ENCODE measurements at regions of chr14 and their contacts with region 1.

Region 1: GRCh38 chr14:80213599-80213998 is 2.3 kb upstream of the DIO2 start:
- DNase-seq: peak; percentile 39
- H3K4me3 ChIP-seq: no peak overlapping the region
- H3K27ac ChIP-seq: no peak overlapping the region
- H3K4me1 ChIP-seq: no peaks in the 10 kb centered on the region
- H3K27me3 ChIP-seq: peaks cover 0 to 2% of the 10 kb centered on the region in 2 experiments
- CTCF ChIP-seq: peak; percentile 43 to 55
- POLR2A ChIP-seq: no peak

Region 2: GRCh38 chr14:80055667-80056496 is 157.7 kb before region 1 on chr14:
- CTCF ChIA-PET with region 1: interaction called, 14 read pairs
- POLR2A ChIA-PET with region 1: no interaction called
- dilution Hi-C with region 1: no loop called
- intact Hi-C with region 1: no loop called
- DNase-seq: peak; percentile 47
- H3K4me3 ChIP-seq: no peak overlapping the region
- H3K27ac ChIP-seq: no peak overlapping the region
- H3K4me1 ChIP-seq: no peaks in the 10 kb centered on the region
- H3K27me3 ChIP-seq: no peaks in the 10 kb centered on the region
- CTCF ChIP-seq: peak; percentile 46 to 61
- POLR2A ChIP-seq: no peak

Region 3: DNA sequence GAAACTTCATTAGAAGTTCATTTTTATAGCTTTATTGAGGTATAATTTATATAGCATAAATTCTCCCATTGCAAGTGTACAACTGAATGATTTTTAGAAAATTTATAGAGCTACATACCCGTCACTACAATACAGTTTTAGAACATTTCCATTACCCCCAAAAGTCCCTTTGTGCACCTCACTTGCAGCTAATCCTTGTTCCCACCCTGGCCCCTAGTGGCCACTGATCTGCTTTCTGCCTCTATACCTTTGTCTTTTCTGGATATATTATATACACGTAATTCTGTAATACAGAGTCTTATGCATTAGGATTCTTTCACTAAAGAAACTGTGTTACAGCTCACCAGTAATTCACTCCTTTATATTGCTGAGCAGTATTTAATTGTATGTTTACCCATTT is 142.8 kb after region 1 on chr14:
- CTCF ChIA-PET with region 1: interaction called, 15 read pairs
- POLR2A ChIA-PET with region 1: no interaction called
- dilution Hi-C with region 1: no loop called
- intact Hi-C with region 1: loop called (anchors 5 kb)
- DNase-seq: peak; percentile 27
- H3K4me3 ChIP-seq: no peak overlapping the region
- H3K27ac ChIP-seq: no peak overlapping the region
- H3K4me1 ChIP-seq: no peaks in the 10 kb centered on the region
- H3K27me3 ChIP-seq: no peaks in the 10 kb centered on the region
- CTCF ChIP-seq: peak in 1 of 2 donors; percentile 28
- POLR2A ChIP-seq: no peak

Region 4: GRCh38 chr14:80587075-80587724 is 373.6 kb after region 1 on chr14:
- CTCF ChIA-PET with region 1: interaction called, 65 read pairs
- POLR2A ChIA-PET with region 1: no interaction called
- dilution Hi-C with region 1: no loop called
- intact Hi-C with region 1: loop called (anchors 5 kb)
- DNase-seq: peak; percentile 48
- H3K4me3 ChIP-seq: no peak overlapping the region
- H3K27ac ChIP-seq: no peak overlapping the region
- H3K4me1 ChIP-seq: peaks cover 7% of the 10 kb centered on the region
- H3K27me3 ChIP-seq: no peaks in the 10 kb centered on the region
- CTCF ChIP-seq: peak; percentile 40 to 47
- POLR2A ChIP-seq: no peak

Region 5: DNA sequence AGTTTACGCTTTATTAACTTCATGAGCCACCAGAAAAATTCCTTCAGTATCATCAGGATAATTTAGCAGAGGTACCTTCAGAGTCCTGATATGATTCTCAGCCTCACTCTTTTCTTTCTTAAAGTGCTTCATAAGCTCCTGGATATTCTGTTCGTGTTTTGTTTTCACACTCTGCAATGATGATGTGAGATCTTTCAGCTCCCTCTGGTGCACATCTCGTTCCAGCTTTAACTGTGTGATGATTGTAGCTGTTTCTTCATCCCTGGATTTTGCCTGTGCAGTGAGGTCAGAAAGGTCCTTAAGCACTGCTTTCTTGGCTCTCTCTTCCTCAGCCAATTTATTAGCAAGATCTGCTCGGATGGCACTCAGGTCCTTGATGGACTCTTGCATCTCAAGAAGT is 571.2 kb after region 1 on chr14:
- CTCF ChIA-PET with region 1: interaction called, 21 read pairs
- POLR2A ChIA-PET with region 1: no interaction called
- dilution Hi-C with region 1: no loop called
- intact Hi-C with region 1: no loop called
- DNase-seq: no peak
- H3K4me3 ChIP-seq: no peak overlapping the region
- H3K27ac ChIP-seq: no peak overlapping the region
- H3K4me1 ChIP-seq: no peaks in the 10 kb centered on the region
- H3K27me3 ChIP-seq: no peaks in the 10 kb centered on the region
- CTCF ChIP-seq: no peak
- POLR2A ChIP-seq: no peak

Region 6: DNA sequence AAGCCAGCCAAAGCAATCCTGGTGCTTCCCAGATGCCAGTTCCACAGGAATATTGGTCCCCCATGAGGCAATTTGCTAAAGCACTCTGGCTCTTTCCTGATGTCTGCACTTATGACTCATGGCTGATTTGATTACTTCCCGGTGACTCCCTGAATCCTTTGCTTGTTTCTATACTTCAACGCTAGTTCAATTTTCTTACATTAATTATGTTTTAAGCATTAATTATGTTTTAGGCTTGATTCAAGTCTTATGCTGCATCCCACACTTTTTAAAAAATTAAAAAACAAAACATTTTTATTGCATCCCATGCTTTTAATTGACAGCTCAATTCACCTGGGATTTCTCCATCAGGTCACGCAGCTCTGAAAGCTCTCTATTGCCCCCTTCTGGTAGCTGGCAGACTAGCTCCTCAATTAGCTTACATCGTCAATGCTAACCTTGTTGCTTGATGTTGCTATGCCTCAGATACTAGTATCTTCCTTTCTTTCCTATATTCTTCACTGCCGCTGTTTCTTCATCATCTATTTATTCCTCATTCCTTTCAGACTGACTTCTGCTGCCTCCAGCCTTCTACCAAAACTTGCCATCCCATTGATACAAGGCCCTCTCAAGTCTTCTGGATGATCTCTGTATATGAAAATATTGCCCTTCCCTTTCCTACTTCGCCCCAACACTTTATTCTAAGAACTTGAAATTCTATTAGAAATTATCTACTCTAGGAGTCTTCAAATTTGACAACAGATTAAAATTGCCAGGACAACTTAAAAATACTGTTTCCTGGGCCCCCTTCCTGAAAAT is 773.8 kb after region 1 on chr14:
- CTCF ChIA-PET with region 1: interaction called, 7 read pairs
- POLR2A ChIA-PET with region 1: no interaction called
- dilution Hi-C with region 1: no loop called
- intact Hi-C with region 1: loop called (anchors 1 kb)
- DNase-seq: peak; percentile 73
- H3K4me3 ChIP-seq: no peak overlapping the region
- H3K27ac ChIP-seq: no peak overlapping the region
- H3K4me1 ChIP-seq: no peaks in the 10 kb centered on the region
- H3K27me3 ChIP-seq: peaks cover 0 to 9% of the 10 kb centered on the region in 2 experiments
- CTCF ChIP-seq: peak; percentile 76 to 89
- POLR2A ChIP-seq: no peak

Measured in endothelial cell of umbilical vein (primary cell).